Tibial artery (tissue), 4 donors: ENCODE measurements at regions of chr3 and their contacts with region 1.

Region 1: DNA sequence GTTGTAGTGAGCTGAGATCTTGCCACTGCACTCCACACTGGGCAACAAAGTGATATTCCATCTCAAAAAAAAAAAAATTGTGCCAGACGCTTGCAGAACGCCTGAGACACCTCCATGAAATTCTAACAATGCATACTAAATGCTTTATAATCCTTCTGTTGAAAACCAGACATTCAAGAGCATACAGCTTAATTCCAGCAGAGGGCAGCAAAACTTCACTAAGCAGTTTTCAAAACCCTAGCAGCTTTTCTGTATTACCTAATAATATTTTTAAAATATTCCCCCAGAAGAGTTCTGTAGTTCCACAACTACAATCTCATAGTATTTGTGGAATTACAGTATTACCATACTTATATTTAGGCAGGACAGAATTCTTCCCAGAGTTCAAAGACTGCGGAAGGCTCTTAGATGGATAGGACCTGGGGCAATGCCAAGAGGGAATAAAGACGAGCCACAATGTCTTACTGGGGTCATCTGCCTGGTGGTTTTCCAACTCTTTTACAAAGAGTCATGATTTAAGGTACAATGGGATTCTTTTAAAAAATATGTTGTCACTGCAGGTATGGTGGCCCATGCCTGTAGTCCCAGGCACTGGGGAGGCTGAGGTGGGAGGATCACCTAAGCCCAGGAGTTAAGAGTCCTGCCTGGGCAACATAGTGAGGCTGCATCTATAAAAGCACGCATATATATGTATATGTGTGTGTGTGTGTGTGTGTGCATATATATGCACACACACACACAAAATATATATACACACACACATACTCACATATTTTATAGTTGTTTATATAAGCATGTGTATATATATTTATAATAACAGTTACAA is 19.6 kb upstream of the TASOR start:
- DNase-seq: peak in 1 of 2 donors; percentile 34
- H3K4me3 ChIP-seq: no peak overlapping the region
- H3K27ac ChIP-seq: no peak overlapping the region
- H3K4me1 ChIP-seq: peaks cover 0 to 3% (median 0%) of the 10 kb centered on the region in 4 donors
- H3K27me3 ChIP-seq: no peaks in the 10 kb centered on the region
- CTCF ChIP-seq: peak; percentile 87 to 90

Region 2: DNA sequence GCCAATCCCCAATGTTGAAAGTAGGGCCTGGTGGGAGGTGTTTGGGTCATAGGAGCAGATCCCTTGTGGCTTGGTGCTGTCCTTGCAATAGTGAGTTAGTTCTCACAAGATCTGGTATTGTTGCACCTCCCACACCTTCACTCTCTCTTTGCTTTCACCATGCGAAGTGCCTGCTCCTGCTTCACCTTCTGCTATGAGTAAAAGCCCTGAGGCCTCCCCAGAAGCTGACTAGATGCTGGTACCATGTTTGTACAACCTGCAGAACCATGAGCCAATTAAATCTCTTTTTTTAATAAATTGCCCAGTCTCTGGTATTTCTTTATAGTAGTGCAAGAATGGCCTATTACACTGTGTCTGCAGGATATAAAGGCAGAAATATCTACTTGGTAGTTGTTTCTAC is 175.0 kb before region 1 on chr3:
- intact Hi-C with region 1: no loop called
- DNase-seq: no peak
- H3K4me3 ChIP-seq: no peak overlapping the region
- H3K27ac ChIP-seq: no peak overlapping the region
- H3K4me1 ChIP-seq: no peaks in the 10 kb centered on the region
- H3K27me3 ChIP-seq: no peaks in the 10 kb centered on the region
- CTCF ChIP-seq: no peak

Region 3: DNA sequence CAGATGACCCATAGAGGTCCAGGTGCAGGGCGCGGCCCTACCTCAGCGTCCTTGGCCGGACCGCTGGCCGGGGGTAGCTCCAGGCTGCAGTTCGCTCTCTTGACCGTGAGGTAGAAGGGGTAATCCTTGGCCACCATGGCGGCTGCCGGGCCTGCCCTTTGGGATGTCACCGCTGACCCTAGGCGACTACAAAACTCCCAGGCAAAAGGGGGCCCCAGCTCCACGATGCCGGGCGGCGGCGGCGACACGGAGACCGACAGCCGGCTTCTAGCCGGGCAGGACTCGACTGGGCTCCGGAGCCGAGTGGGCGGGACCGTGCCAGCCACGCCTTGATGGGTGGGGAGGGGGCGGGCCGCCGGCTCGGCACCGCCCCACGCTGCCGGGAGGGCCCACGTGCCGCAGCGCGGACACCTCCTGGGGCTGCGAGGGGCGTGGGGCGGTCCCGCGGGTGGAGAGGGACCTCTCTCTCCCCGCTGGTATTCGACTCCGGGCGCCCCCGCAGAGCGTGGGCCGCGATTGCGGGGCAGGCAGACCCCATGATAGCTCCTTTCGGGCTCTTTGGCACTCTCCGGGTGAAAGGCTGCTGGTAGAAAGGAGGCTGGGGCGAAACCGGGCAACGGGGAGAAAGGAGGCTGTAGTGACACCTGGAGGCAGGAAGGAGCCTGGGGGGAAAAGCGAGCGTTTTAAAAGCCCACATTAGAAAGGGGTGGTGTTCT is 99.1 kb after region 1 on chr3 and contains the start of gene ARHGEF3:
- intact Hi-C with region 1: loop called (anchors 5 kb)
- DNase-seq: peak; percentile 72 to 87
- H3K4me3 ChIP-seq: peak within 1 kb of the TSS; percentile 67 to 82
- H3K27ac ChIP-seq: peak within 1 kb of the TSS; percentile 50 to 55
- H3K4me1 ChIP-seq: peaks cover 0 to 28% (median 19%) of the 10 kb centered on the region in 4 donors
- H3K27me3 ChIP-seq: no peaks in the 10 kb centered on the region
- CTCF ChIP-seq: peak in 1 of 2 experiments; percentile 11

Region 4: DNA sequence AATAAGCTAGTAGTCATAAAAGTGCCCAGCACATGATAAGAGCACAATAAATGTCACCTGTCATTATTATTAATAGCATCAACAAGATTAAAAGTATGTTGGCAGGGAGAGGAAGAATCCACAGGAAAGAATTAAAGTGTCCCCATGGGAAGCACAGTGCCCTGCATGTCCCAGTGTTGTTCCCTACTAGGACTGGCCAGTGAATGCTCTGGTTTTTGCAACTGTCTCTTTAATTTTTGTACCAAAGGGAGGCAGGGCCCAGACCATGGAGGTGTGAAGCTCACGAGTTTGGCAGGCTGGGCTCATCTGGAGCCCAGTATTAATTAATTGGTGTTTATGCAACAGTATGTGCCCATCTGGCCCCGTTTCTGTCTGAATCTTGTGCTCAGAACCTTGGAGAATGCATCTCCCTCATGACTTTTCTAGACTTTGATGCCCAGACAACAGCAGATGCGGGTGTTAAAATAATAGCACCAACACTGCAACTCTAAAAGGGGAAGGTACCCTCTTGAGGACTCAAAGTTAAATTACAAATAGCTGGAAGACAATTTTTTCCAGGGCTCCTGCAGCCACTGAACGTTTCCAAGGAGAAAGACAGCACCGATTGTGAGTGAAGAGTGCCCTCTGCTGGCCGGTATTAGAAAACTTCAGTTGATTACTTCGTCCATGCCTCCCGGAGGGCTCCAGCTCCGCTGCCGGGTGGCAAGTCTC is 285.9 kb after region 1 on chr3:
- intact Hi-C with region 1: loop called (anchors 2 kb)
- DNase-seq: peak; percentile 81 to 85
- H3K4me3 ChIP-seq: no peak overlapping the region
- H3K27ac ChIP-seq: no peak overlapping the region
- H3K4me1 ChIP-seq: peaks cover 0 to 40% (median 26%) of the 10 kb centered on the region in 4 donors
- H3K27me3 ChIP-seq: peaks cover 0 to 10% of the 10 kb centered on the region in 2 donors
- CTCF ChIP-seq: peak; percentile 76 to 89

Region 5: DNA sequence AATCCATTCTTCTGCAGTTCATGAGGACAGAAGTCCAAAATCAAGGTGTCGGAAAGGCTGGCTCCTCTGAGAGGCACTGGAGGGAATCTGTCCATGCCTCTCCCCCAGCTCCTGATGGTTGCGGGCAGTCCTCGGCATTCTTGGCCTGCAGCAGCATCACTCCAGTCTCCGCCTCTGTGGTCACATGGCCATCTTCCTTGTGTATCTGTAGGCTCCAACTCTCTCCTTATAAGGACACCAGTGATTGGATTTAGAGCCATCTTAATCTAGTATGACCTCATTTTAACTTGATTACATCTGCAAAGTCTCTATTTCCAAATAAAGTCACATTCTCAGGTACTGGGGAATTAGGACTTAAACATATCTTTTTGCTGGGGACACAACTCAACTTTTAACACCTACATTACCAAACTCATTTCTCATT is 1249.5 kb after region 1 on chr3:
- intact Hi-C with region 1: no loop called
- DNase-seq: peak; percentile 80 to 90
- H3K4me3 ChIP-seq: peak overlapping the region in 1 of 2 donors; percentile 9
- H3K27ac ChIP-seq: peak overlapping the region; percentile 76 to 88
- H3K4me1 ChIP-seq: peaks cover 0 to 39% (median 37%) of the 10 kb centered on the region in 4 donors
- H3K27me3 ChIP-seq: no peaks in the 10 kb centered on the region
- CTCF ChIP-seq: no peak